ENCODE measurements at regions of chr5 and their contacts with region 1.

Region 1: GRCh38 chr5:180090098-180090768 is 18.7 kb upstream of the RNF130 start:
- DNase-seq: peak; percentile 75 to 90
- H3K4me3 ChIP-seq: peak overlapping the region; percentile 62
- H3K4me3 Mint-ChIP-seq: peak overlapping the region; percentile 76
- H3K27ac Mint-ChIP-seq: peak overlapping the region; percentile 71
- H3K4me1 ChIP-seq: peaks cover 5% of the 10 kb centered on the region; the same call in 1 of the 2 replicates
- H3K4me1 Mint-ChIP-seq: no peaks in the 10 kb centered on the region
- H3K27me3 ChIP-seq: no peaks in the 10 kb centered on the region
- H3K27me3 Mint-ChIP-seq: no peaks in the 10 kb centered on the region
- CTCF ChIP-seq: peak; percentile 76 to 92

Region 2: DNA sequence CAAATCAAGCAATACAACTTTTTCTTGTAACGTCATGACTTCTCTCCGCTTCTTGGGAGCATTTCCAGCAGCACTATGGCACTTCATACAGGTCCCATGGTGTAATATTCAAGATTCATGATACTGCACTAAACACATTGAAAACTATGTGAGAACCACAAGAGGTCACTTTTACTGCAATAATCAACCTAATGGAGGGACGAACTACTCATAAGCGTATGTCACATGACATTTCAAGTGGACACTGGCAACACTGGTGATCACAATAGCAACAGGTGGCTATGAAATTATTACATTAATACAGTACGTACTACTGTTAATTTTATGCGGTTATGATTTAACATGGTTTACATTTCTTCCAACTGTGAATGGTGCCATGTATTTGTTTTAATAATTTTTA is 103.9 kb before region 1 on chr5:
- CTCF ChIA-PET with region 1: no interaction called
- POLR2A ChIA-PET with region 1: no interaction called
- intact Hi-C with region 1: loop called (anchors 1 kb)
- DNase-seq: no peak
- H3K4me3 ChIP-seq: no peak overlapping the region
- H3K4me3 Mint-ChIP-seq: no peak overlapping the region
- H3K27ac Mint-ChIP-seq: no peak overlapping the region
- H3K4me1 ChIP-seq: no peaks in the 10 kb centered on the region
- H3K4me1 Mint-ChIP-seq: no peaks in the 10 kb centered on the region
- H3K27me3 ChIP-seq: no peaks in the 10 kb centered on the region
- H3K27me3 Mint-ChIP-seq: no peaks in the 10 kb centered on the region
- CTCF ChIP-seq: peak in 1 of 2 experiments; percentile 15

Region 3: DNA sequence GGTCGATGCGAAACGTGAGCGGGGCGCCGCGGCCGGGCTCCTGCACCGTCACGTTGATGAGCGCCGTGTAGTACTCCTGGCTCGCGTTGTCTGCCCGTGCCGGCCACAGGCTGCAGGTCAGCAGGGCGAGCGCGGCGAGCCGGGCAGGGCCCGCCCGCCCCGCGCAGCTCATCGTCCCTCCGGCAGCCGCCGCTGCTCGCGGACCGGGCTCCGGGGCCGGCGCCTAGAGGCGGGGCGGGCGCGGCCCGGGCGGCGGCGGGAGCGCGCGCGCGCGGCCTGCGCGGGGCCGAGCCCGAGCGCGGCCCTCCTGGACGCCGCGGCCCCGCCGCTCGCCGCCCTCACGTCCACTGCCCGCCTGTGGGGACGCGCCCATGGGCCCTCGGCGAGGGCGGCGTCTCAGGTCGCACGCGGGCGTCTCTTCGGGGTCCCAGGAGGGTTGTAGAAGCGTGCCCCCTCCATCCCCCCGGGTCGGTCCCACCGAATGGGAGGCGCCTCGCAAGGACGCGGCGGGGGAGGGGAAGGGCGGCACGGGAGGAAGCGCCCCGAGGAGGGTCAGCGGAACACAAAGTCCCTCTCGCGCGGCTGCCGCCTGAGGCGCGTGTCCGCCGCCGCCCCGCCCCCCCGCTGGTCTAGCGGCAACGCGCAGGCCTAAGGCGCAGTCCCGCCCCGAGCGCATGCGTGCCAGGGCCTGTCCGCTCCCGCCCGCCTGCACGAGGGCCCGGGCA is 18.5 kb before region 1 on chr5 and contains the start of gene RNF130:
- CTCF ChIA-PET with region 1: no interaction called
- POLR2A ChIA-PET with region 1: no interaction called
- intact Hi-C with region 1: loop called (anchors 1 kb)
- DNase-seq: peak; percentile 91 to 97
- H3K4me3 ChIP-seq: peak within 1 kb of the TSS; percentile 95
- H3K4me3 Mint-ChIP-seq: peak within 1 kb of the TSS; percentile 90
- H3K27ac Mint-ChIP-seq: peak within 1 kb of the TSS; percentile 63
- H3K4me1 ChIP-seq: peaks cover 12% of the 10 kb centered on the region; the same call in 1 of the 2 replicates
- H3K4me1 Mint-ChIP-seq: peaks cover 6% of the 10 kb centered on the region
- H3K27me3 ChIP-seq: no peaks in the 10 kb centered on the region; the same call in 1 of the 2 replicates
- H3K27me3 Mint-ChIP-seq: peaks cover 11% of the 10 kb centered on the region
- CTCF ChIP-seq: no peak
- total RNA-seq, gene RNF130: 30.2 and 34.5 TPM in 2 replicates

Region 4: GRCh38 chr5:180315762-180316212 is 225.6 kb after region 1 on chr5:
- CTCF ChIA-PET with region 1: no interaction called
- POLR2A ChIA-PET with region 1: no interaction called
- intact Hi-C with region 1: no loop called
- DNase-seq: peak; percentile 67 to 81
- H3K4me3 ChIP-seq: no peak overlapping the region
- H3K4me3 Mint-ChIP-seq: no peak overlapping the region
- H3K27ac Mint-ChIP-seq: no peak overlapping the region
- H3K4me1 ChIP-seq: no peaks in the 10 kb centered on the region
- H3K4me1 Mint-ChIP-seq: peaks cover 7% of the 10 kb centered on the region
- H3K27me3 ChIP-seq: no peaks in the 10 kb centered on the region
- H3K27me3 Mint-ChIP-seq: peaks cover 2% of the 10 kb centered on the region
- CTCF ChIP-seq: peak; percentile 85 to 92

Measured in Caco-2 (cell line).